Posterior cingulate gyrus (tissue), 11 donors: ENCODE measurements at regions of chr2 and their contacts with region 1.

Region 1: GRCh38 chr2:234544659-234545611 is 48.1 kb upstream of the ARL4C start:
- DNase-seq: peak; percentile 34 to 94 (median 72)

Region 2: DNA sequence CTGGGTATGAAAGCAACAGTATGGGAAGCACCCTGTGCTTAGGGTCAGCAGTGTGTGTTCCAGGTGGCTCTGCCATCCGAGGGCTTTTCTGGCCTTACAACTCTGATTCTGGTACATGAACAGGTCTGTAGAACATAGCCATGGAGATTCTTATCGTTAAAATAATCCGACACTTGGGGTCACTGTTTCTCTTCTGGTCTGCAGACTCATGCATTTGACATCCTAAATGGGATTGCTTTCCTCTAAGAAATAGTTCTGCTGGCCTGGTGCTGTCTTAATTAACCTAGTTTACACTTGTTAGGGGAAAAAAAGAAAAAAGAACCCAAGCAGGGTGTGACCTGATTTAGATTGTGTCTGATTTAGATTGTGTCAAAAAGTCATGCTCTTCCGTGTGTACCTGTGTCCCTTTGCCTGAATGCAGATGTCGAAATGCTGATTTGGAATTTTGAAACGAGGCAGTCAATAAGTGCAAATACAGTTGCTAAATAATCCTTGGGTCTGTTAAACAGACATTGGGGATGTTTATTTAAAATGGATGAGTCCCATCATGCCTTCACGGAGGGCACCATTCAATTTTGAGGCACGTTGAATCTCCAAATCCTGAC is 568.1 kb before region 1 on chr2:
- intact Hi-C with region 1: loop called (anchors 1 kb)
- DNase-seq: no peak

Region 3: DNA sequence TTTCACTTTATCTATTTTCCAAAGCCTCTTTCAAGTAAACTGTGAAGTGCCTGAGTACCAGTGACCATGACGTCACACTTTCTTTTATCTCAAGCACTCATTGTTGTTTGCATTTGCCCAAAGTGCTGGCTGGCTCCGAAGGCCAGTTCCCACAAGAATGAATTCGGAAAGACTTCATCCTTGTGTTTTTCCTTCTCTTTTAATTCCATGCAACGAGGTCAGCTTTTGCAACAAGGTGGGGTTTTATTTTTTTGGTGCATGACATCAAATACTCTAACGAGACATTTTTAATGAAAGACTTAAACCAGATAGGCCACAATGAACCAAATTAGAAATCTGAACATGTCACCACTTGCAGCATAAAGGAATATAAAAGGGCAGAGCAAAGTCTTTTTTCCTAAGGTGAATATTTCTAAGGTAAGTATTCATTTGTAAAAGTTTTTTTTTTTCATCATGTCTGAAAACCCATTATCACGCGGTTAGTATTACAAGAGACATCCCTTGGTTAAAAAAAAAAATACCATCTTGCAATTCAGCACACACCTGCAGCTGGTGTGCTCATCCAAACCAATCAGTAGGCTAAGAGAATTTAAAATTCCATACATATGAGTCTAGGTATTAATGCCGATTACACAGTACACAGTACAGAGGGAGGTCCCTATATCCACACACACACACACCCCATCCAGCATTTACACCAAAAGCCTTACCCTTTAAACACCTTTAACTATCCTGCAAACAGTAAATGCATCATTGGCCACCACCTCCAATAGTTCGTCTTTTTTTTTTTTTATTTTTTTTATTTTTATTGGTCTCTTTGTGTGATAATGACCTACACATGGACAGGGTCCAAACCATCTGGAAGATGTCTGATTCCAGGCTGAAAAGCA is 50.3 kb before region 1 on chr2:
- intact Hi-C with region 1: no loop called
- DNase-seq: no peak